Mucosa of descending colon (tissue), 3 donors: ENCODE measurements at regions of chr9 and their contacts with region 1.

Region 1: DNA sequence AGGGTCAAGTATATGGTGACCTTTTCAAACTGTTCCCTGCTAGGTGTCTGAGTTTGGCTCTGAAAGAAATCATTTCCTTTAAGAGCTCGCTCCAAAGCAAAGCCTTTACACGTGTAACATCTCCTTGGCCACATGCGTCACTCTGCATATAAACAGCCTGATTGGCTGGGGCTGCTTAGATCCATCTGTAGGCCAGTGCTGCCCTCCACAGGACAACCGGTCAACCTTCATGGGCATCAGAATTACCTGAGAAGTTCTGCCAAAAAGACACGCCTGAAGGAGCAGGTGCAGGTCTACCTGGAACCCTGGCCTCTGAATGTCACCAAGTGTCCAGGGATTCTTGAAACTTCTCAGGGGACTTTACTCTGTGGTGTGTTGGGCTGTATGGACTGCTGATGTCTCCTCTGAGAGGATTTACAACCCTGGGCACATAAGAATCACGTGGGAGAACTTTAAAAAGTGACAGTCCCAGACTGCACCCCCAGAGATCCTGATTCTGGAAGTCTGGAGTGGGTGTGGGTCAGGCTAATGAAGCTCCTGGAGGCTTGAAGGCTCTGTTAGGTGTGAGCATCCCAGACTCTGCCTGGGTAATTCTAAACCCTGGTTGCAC is 497.6 kb downstream of the GADD45G start:
- DNase-seq: peak; percentile 86 to 91 (median 86)
- ATAC-seq: peak; percentile 99
- H3K4me3 ChIP-seq: no peak overlapping the region
- H3K4me1 ChIP-seq: peaks cover 4% of the 10 kb centered on the region
- CTCF ChIP-seq: peak; percentile 56

Region 2: GRCh38 chr9:89597711-89598625 is 504.4 kb before region 1 on chr9:
- intact Hi-C with region 1: loop called (anchors 2 kb)
- DNase-seq: peak in 1 of 3 donors; percentile 83
- ATAC-seq: peak; percentile 63
- H3K4me3 ChIP-seq: no peak overlapping the region
- H3K4me1 ChIP-seq: no peaks in the 10 kb centered on the region
- CTCF ChIP-seq: no peak